Right lobe of liver (tissue), 6 donors: ENCODE measurements at regions of chr11 and their contacts with region 1.

Region 1: GRCh38 chr11:47161134-47161854 is 15.4 kb downstream of the ARFGAP2 start:
- DNase-seq: peak in 1 of 3 donors; percentile 62
- ATAC-seq: peak; percentile 78 to 83 (median 80)
- H3K4me3 ChIP-seq: no peak overlapping the region
- H3K27ac ChIP-seq: no peak overlapping the region
- H3K4me1 ChIP-seq: no peaks in the 10 kb centered on the region
- H3K27me3 ChIP-seq: no peaks in the 10 kb centered on the region
- CTCF ChIP-seq: peak; percentile 55 to 72 (median 64)
- POLR2A ChIP-seq: no peak

Region 2: GRCh38 chr11:46639197-46639839 is 522.0 kb before region 1 on chr11:
- intact Hi-C with region 1: loop called in 1 of 2 experiments (anchors 10 kb)
- DNase-seq: no peak
- ATAC-seq: peak in 1 of 4 donors; percentile 28
- H3K4me3 ChIP-seq: no peak overlapping the region
- H3K27ac ChIP-seq: peak overlapping the region in 1 of 3 donors; percentile 50
- H3K4me1 ChIP-seq: peaks cover 0 to 33% (median 7%) of the 10 kb centered on the region in 4 donors
- H3K27me3 ChIP-seq: no peaks in the 10 kb centered on the region
- CTCF ChIP-seq: no peak
- POLR2A ChIP-seq: no peak

Region 3: DNA sequence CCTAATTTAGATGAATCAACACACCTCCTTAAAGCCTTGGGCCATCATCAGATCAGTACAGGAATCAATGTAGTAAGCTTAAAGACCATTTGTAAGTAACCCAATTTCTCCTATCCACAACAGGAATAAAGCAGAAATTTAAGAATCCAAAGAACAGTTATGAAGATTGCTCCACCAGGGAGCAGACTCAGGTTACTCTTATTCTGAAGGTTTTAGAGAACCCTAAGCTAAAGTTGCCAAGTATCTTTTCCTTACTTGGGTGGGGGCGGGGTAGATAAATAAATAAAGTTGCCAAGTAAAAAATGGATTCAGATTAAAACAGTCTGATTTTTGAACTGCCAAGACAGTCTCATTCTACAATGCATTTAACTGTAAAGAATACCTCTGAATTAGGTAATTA is 333.3 kb before region 1 on chr11:
- intact Hi-C with region 1: no loop called
- DNase-seq: no peak
- ATAC-seq: no peak
- H3K4me3 ChIP-seq: no peak overlapping the region
- H3K27ac ChIP-seq: no peak overlapping the region
- H3K4me1 ChIP-seq: peaks cover 0 to 17% (median 4%) of the 10 kb centered on the region in 4 donors
- H3K27me3 ChIP-seq: no peaks in the 10 kb centered on the region
- CTCF ChIP-seq: no peak
- POLR2A ChIP-seq: no peak

Region 4: GRCh38 chr11:47213985-47214564 is 52.8 kb after region 1 on chr11:
- intact Hi-C with region 1: no loop called
- DNase-seq: peak; percentile 95 to 97 (median 96)
- ATAC-seq: peak; percentile 87 to 95 (median 90)
- H3K4me3 ChIP-seq: peak overlapping the region; percentile 62 to 89 (median 64)
- H3K27ac ChIP-seq: peak overlapping the region; percentile 86 to 89 (median 89)
- H3K4me1 ChIP-seq: peaks cover 0 to 17% (median 6%) of the 10 kb centered on the region in 4 donors
- H3K27me3 ChIP-seq: no peaks in the 10 kb centered on the region
- CTCF ChIP-seq: no peak
- POLR2A ChIP-seq: peak; percentile 70

Region 5: GRCh38 chr11:47225552-47226400 is 64.5 kb after region 1 on chr11:
- intact Hi-C with region 1: no loop called
- DNase-seq: no peak
- ATAC-seq: peak in 2 of 4 donors; percentile 55 to 67
- H3K4me3 ChIP-seq: no peak overlapping the region
- H3K27ac ChIP-seq: no peak overlapping the region
- H3K4me1 ChIP-seq: no peaks in the 10 kb centered on the region
- H3K27me3 ChIP-seq: no peaks in the 10 kb centered on the region
- CTCF ChIP-seq: no peak
- POLR2A ChIP-seq: no peak